CD4-positive, alpha-beta memory T cell (primary cell): ENCODE measurements at regions of chr10 and their contacts with region 1.

Region 1: DNA sequence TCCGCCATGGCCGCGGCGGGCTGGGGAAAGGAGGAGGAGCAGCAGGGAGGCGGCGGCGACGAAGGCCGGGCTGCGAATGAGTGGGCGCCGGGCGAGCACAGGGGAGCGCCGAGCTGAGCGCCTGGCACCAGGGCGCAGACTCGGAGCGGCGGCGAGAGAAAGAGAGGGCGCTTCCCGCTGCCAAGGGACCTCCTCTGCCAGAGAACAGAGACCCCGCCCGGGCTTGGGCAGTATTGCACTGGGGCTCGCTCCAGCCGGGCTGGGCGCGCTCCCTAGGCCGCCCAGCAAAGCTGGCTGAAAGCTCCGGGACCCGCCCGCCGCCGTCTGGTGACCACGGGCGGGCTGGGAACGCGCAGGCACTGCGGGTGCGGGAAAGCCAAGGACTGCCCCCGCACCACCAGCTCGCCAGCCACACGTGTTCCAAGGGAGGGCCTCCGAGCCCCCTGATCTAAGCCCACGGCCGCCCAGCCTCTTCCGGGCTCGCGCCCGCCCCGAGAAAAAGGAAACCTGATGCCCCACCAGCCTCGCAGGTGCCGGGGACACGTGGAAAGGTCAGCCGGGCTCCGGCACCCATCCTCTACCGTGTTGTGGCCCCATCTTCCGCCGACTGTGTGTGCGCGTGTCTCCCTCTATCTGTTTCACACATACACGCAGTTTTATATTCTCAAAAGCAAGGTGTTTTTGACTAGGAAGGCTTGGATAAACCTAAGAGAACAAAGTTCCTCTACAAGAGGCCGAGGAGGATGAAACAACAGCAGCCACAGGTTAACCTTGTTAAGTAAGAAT is at the start of gene CCDC6:
- DNase-seq: peak; percentile 91 to 93 (median 93)
- H3K4me3 ChIP-seq: peak within 1 kb of the TSS; percentile 80 to 81
- H3K4me3 Mint-ChIP-seq: peak within 1 kb of the TSS; percentile 93 to 98 (median 96)
- H3K27ac ChIP-seq: peak within 1 kb of the TSS; percentile 77
- H3K27ac Mint-ChIP-seq: peak within 1 kb of the TSS; percentile 89 to 99 (median 96)
- H3K4me1 ChIP-seq: peaks cover 56% of the 10 kb centered on the region
- H3K4me1 Mint-ChIP-seq: peaks cover 46 to 61% (median 57%) of the 10 kb centered on the region in 4 donors
- H3K27me3 ChIP-seq: no peaks in the 10 kb centered on the region
- H3K27me3 Mint-ChIP-seq: no peaks in the 10 kb centered on the region
- total RNA-seq, gene CCDC6: 20.9 to 22.5 TPM

Region 2: GRCh38 chr10:58384999-58385783 is 1521.4 kb before region 1 on chr10 and contains the start of gene TFAM:
- CTCF ChIA-PET with region 1: no interaction called
- POLR2A ChIA-PET with region 1: no interaction called
- intact Hi-C with region 1: loop called (anchors 2 kb)
- DNase-seq: peak; percentile 92 to 95 (median 93)
- H3K4me3 ChIP-seq: peak within 1 kb of the TSS; percentile 89 to 96
- H3K4me3 Mint-ChIP-seq: peak within 1 kb of the TSS; percentile 90 to 99 (median 98)
- H3K27ac ChIP-seq: peak within 1 kb of the TSS; percentile 74
- H3K27ac Mint-ChIP-seq: peak within 1 kb of the TSS; percentile 92 to 98 (median 96)
- H3K4me1 ChIP-seq: peaks cover 48% of the 10 kb centered on the region
- H3K4me1 Mint-ChIP-seq: peaks cover 28 to 57% (median 39%) of the 10 kb centered on the region in 4 donors
- H3K27me3 ChIP-seq: no peaks in the 10 kb centered on the region
- H3K27me3 Mint-ChIP-seq: peaks cover 0 to 1% of the 10 kb centered on the region in 2 donors
- total RNA-seq, gene TFAM: 45.6 to 52.1 TPM

Region 3: DNA sequence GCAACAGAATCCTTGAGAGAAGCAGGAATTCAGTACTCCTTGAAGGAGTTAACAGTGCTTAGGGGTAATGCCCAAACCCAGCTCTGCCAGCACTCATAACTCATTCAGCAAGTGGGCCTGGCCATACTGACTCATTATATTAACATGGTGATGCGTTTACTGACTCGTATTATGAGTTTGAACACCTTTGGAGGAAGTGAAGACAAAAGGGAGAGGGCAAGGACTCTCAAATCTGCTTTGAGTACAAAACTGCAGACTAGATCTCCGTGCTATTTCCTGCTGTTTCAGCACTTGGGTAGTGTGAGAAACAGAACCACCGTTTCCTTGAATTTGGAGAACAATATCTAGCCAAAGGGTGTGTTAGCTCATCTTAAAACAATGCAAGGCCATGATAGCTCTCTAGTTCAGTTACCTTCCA is 227.7 kb before region 1 on chr10:
- CTCF ChIA-PET with region 1: no interaction called
- POLR2A ChIA-PET with region 1: no interaction called
- intact Hi-C with region 1: no loop called
- DNase-seq: no peak
- H3K4me3 ChIP-seq: no peak overlapping the region
- H3K4me3 Mint-ChIP-seq: no peak overlapping the region
- H3K27ac ChIP-seq: no peak overlapping the region
- H3K27ac Mint-ChIP-seq: no peak overlapping the region
- H3K4me1 ChIP-seq: no peaks in the 10 kb centered on the region
- H3K4me1 Mint-ChIP-seq: no peaks in the 10 kb centered on the region
- H3K27me3 ChIP-seq: no peaks in the 10 kb centered on the region
- H3K27me3 Mint-ChIP-seq: no peaks in the 10 kb centered on the region

Region 4: DNA sequence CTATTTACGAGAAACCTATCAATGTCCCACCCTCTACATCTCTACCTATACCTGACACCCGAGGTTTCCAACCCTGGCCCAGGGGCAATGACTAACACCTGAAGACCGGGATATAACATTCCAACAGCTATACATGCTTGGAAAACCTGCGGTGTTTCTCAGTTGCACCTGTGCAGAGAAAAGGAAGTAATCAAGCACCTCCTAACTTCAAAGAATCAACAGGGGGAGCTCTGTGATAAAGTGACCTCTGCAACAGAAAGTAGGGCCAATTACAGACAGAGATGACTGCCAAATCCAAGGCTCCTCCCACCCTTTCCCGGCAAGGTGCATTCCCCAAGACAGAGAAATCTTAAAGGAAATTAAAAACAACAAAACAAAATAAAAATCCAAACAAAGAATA is 41.5 kb before region 1 on chr10:
- CTCF ChIA-PET with region 1: interaction called, 20 read pairs
- POLR2A ChIA-PET with region 1: interaction called, 11 read pairs
- intact Hi-C with region 1: loop called (anchors 1 kb)
- DNase-seq: peak in 1 of 5 donors; percentile 22
- H3K4me3 ChIP-seq: no peak overlapping the region
- H3K4me3 Mint-ChIP-seq: peak overlapping the region in 5 of 8 donors; percentile 1 to 47 (median 12)
- H3K27ac ChIP-seq: no peak overlapping the region
- H3K27ac Mint-ChIP-seq: peak overlapping the region in 5 of 7 donors; percentile 2 to 63 (median 9)
- H3K4me1 ChIP-seq: peaks cover 24% of the 10 kb centered on the region
- H3K4me1 Mint-ChIP-seq: peaks cover 46 to 78% (median 65%) of the 10 kb centered on the region in 4 donors
- H3K27me3 ChIP-seq: no peaks in the 10 kb centered on the region
- H3K27me3 Mint-ChIP-seq: no peaks in the 10 kb centered on the region

Region 5: GRCh38 chr10:59885430-59886134 is 21.0 kb before region 1 on chr10:
- CTCF ChIA-PET with region 1: interaction called, 13 read pairs
- POLR2A ChIA-PET with region 1: interaction called, 6 read pairs
- intact Hi-C with region 1: loop called (anchors 2 kb)
- DNase-seq: no peak
- H3K4me3 ChIP-seq: no peak overlapping the region
- H3K4me3 Mint-ChIP-seq: peak overlapping the region in 6 of 8 donors; percentile 6 to 65 (median 25)
- H3K27ac ChIP-seq: no peak overlapping the region
- H3K27ac Mint-ChIP-seq: peak overlapping the region in 2 of 7 donors; percentile 8 to 57
- H3K4me1 ChIP-seq: peaks cover 52% of the 10 kb centered on the region
- H3K4me1 Mint-ChIP-seq: peaks cover 63 to 87% (median 75%) of the 10 kb centered on the region in 4 donors
- H3K27me3 ChIP-seq: no peaks in the 10 kb centered on the region
- H3K27me3 Mint-ChIP-seq: no peaks in the 10 kb centered on the region

Region 6: GRCh38 chr10:59945664-59946390 is 39.2 kb after region 1 on chr10:
- CTCF ChIA-PET with region 1: no interaction called
- POLR2A ChIA-PET with region 1: no interaction called
- intact Hi-C with region 1: no loop called
- DNase-seq: no peak
- H3K4me3 ChIP-seq: no peak overlapping the region
- H3K4me3 Mint-ChIP-seq: no peak overlapping the region
- H3K27ac ChIP-seq: no peak overlapping the region
- H3K27ac Mint-ChIP-seq: peak overlapping the region in 1 of 7 donors; percentile 45
- H3K4me1 ChIP-seq: no peaks in the 10 kb centered on the region
- H3K4me1 Mint-ChIP-seq: no peaks in the 10 kb centered on the region
- H3K27me3 ChIP-seq: no peaks in the 10 kb centered on the region
- H3K27me3 Mint-ChIP-seq: peaks cover 8 to 13% of the 10 kb centered on the region in 2 donors

Region 7: GRCh38 chr10:60778214-60779029 is 871.8 kb after region 1 on chr10 and contains the start of gene CDK1:
- CTCF ChIA-PET with region 1: no interaction called
- POLR2A ChIA-PET with region 1: no interaction called
- intact Hi-C with region 1: loop called (anchors 2 kb)
- DNase-seq: peak; percentile 94 to 97 (median 95)
- H3K4me3 ChIP-seq: peak within 1 kb of the TSS; percentile 64 to 79
- H3K4me3 Mint-ChIP-seq: peak within 1 kb of the TSS; percentile 93 to 99 (median 96)
- H3K27ac ChIP-seq: peak within 1 kb of the TSS; percentile 32
- H3K27ac Mint-ChIP-seq: peak within 1 kb of the TSS; percentile 67 to 93 (median 88)
- H3K4me1 ChIP-seq: peaks cover 33% of the 10 kb centered on the region
- H3K4me1 Mint-ChIP-seq: peaks cover 15 to 33% (median 20%) of the 10 kb centered on the region in 4 donors
- H3K27me3 ChIP-seq: no peaks in the 10 kb centered on the region
- H3K27me3 Mint-ChIP-seq: peaks cover 2 to 4% of the 10 kb centered on the region in 2 donors
- total RNA-seq, gene CDK1: 1.3 to 1.6 TPM